Endothelial cell of umbilical vein (primary cell): ENCODE measurements at regions of chr12 and their contacts with region 1.

Region 1: GRCh38 chr12:29234965-29235626 is 86.0 kb downstream of the FAR2 start:
- DNase-seq: peak; percentile 97
- H3K4me3 ChIP-seq: no peak overlapping the region
- H3K27ac ChIP-seq: peak overlapping the region; percentile 82
- H3K4me1 ChIP-seq: peaks cover 58% of the 10 kb centered on the region
- H3K27me3 ChIP-seq: no peaks in the 10 kb centered on the region
- CTCF ChIP-seq: no peak
- POLR2A ChIP-seq: no peak

Region 2: GRCh38 chr12:28443337-28443736 is 791.8 kb before region 1 on chr12:
- CTCF ChIA-PET with region 1: no interaction called
- POLR2A ChIA-PET with region 1: no interaction called
- dilution Hi-C with region 1: no loop called
- intact Hi-C with region 1: no loop called
- DNase-seq: no peak
- H3K4me3 ChIP-seq: no peak overlapping the region
- H3K27ac ChIP-seq: no peak overlapping the region
- H3K4me1 ChIP-seq: no peaks in the 10 kb centered on the region
- H3K27me3 ChIP-seq: no peaks in the 10 kb centered on the region
- CTCF ChIP-seq: no peak
- POLR2A ChIP-seq: no peak

Region 3: GRCh38 chr12:29164477-29165393 is 70.4 kb before region 1 on chr12:
- CTCF ChIA-PET with region 1: no interaction called
- POLR2A ChIA-PET with region 1: no interaction called
- dilution Hi-C with region 1: no loop called
- intact Hi-C with region 1: loop called (anchors 2 kb)
- DNase-seq: peak; percentile 85
- H3K4me3 ChIP-seq: no peak overlapping the region
- H3K27ac ChIP-seq: peak overlapping the region; percentile 82
- H3K4me1 ChIP-seq: peaks cover 26% of the 10 kb centered on the region
- H3K27me3 ChIP-seq: no peaks in the 10 kb centered on the region
- CTCF ChIP-seq: no peak
- POLR2A ChIP-seq: no peak

Region 4: DNA sequence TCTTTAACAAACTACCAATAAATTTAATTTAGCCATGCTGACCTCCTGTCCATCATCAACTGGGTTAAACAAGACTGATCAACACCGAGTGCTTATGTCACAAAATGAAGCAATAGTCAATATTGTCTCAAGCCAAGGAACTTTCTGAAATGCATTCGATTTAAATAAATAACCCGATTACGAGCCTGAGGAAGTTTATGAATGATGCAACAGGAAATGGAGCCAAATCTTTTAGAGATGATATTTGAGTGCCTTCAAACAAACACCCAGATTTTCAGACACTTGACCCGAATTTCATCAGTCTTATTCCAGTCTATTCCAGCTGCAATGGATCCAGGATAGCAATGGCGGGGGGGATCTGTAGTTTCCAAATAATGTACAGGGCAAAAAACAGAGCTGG is 58.2 kb before region 1 on chr12:
- CTCF ChIA-PET with region 1: no interaction called
- POLR2A ChIA-PET with region 1: no interaction called
- dilution Hi-C with region 1: no loop called
- intact Hi-C with region 1: no loop called
- DNase-seq: no peak
- H3K4me3 ChIP-seq: no peak overlapping the region
- H3K27ac ChIP-seq: no peak overlapping the region
- H3K4me1 ChIP-seq: peaks cover 11% of the 10 kb centered on the region
- H3K27me3 ChIP-seq: no peaks in the 10 kb centered on the region
- CTCF ChIP-seq: no peak
- POLR2A ChIP-seq: no peak